ENCODE measurements at regions of chr3 and their contacts with region 1.

Region 1: DNA sequence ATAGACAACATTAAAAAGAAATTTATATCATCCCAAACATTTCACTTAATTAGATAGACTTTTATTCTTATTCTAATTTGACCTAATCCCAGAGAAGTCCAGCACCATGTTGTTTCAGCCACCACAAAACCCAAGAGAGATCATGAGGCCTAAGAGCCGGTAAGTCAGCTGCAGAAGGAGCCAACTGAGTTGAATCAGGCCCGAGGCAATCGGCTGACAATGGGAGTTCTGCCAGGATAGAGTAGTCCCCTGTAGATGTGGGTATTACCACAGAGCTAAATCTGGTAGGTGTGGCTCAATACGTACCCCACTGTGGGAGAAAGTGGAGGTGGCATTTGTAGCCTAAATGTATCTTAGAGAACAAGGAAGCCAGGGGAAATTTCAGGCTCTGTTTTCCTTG is 49.7 kb upstream of the UMPS start:
- DNase-seq: no peak
- H3K4me3 ChIP-seq: no peak overlapping the region
- H3K27ac ChIP-seq: no peak overlapping the region
- H3K4me1 ChIP-seq: no peaks in the 10 kb centered on the region
- H3K27me3 ChIP-seq: no peaks in the 10 kb centered on the region
- CTCF ChIP-seq: no peak
- EP300 ChIP-seq: no peak
- POLR2A ChIP-seq: no peak

Region 2: GRCh38 chr3:124569761-124570160 is 110.8 kb before region 1 on chr3:
- in situ Hi-C with region 1: loop called in 3 of 4 experiments (anchors 5 to 10 kb)
- intact Hi-C with region 1: no loop called
- DNase-seq: no peak
- H3K4me3 ChIP-seq: no peak overlapping the region
- H3K27ac ChIP-seq: no peak overlapping the region
- H3K4me1 ChIP-seq: no peaks in the 10 kb centered on the region
- H3K27me3 ChIP-seq: no peaks in the 10 kb centered on the region
- CTCF ChIP-seq: no peak
- EP300 ChIP-seq: no peak
- POLR2A ChIP-seq: no peak